CD8-positive, alpha-beta T cell (primary cell): ENCODE measurements at regions of chr1 and their contacts with region 1.

Region 1: DNA sequence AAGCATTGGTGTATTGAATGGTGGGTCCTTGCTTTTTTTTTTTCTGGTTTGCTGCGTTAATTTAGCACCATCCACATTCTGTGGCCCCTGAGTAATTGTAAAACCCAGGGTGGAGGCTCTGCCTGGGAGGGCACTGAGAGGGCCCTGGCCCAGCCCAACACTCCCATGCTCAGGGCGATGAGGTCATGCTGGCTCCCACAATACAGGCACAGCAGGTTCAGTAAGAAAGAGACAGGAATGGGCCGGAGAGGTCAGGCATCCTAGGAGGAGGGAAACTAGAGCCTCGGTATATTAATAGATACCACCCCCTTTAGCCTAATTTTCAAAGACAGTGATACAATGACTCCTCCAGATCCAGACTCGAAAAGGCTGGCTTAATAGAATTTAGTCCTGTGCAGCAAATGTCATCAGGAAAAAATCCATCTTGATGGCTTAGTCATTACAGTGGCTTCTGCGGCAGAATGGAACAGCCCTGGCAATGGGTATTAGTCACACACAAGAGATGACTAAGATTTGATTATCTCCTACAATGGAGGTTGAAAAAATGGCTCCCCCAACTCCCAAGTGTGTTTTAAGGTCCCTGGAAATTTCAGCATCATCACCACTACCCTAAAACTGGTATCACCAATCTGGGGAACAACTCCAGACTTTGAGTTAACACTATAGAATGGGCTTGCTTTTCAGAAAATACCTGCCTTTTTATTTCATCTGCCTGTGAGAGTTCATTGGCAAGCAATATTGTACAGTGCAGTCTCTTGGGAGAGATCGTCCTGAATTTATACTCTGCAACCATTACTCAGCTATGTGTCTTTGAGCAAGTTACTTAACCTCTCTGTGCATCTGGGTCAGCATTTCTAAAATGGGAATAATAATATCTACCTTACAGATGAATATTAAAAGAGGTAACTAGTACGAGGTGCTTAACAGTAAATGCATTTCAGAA is 43.9 kb upstream of the LYST start:
- DNase-seq: no peak
- ATAC-seq: no peak
- H3K4me3 ChIP-seq: no peak overlapping the region
- H3K4me3 Mint-ChIP-seq: no peak overlapping the region
- H3K27ac ChIP-seq: no peak overlapping the region
- H3K27ac Mint-ChIP-seq: no peak overlapping the region
- H3K4me1 ChIP-seq: no peaks in the 10 kb centered on the region
- H3K4me1 Mint-ChIP-seq: no peaks in the 10 kb centered on the region
- H3K27me3 ChIP-seq: no peaks in the 10 kb centered on the region
- H3K27me3 Mint-ChIP-seq: no peaks in the 10 kb centered on the region
- CTCF ChIP-seq: no peak

Region 2: GRCh38 chr1:235852887-235853286 is 57.7 kb before region 1 on chr1:
- CTCF ChIA-PET with region 1: no interaction called
- POLR2A ChIA-PET with region 1: no interaction called
- intact Hi-C with region 1: no loop called
- DNase-seq: no peak
- ATAC-seq: no peak
- H3K4me3 ChIP-seq: no peak overlapping the region
- H3K4me3 Mint-ChIP-seq: no peak overlapping the region
- H3K27ac ChIP-seq: no peak overlapping the region
- H3K27ac Mint-ChIP-seq: no peak overlapping the region
- H3K4me1 ChIP-seq: peaks cover 21% of the 10 kb centered on the region
- H3K4me1 Mint-ChIP-seq: peaks cover 79% of the 10 kb centered on the region
- H3K27me3 ChIP-seq: no peaks in the 10 kb centered on the region
- H3K27me3 Mint-ChIP-seq: no peaks in the 10 kb centered on the region
- CTCF ChIP-seq: no peak

Region 3: DNA sequence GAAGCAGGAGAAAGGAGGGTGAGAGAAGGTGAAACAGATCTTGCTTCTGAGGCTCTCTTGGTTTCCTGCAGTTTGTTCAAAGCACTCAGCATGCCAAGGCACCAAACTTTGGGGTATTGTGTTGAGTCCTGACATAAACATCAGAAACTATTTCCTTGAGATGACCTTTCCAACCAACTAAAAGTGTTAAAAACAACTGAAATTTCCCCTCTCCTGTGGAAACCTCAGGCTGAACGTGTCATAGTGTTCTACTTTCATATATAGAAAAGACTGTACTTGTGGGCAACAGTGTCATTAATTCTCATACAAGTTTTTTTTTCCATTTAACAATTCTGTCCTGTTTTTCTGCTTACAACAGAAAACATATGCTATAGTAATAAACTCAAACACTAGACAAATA is 37.6 kb before region 1 on chr1:
- CTCF ChIA-PET with region 1: no interaction called
- POLR2A ChIA-PET with region 1: no interaction called
- intact Hi-C with region 1: loop called in 1 of 2 experiments (anchors 5 kb)
- DNase-seq: peak in 3 of 9 experiments; percentile 32 to 85 (median 65)
- ATAC-seq: peak; percentile 32
- H3K4me3 ChIP-seq: no peak overlapping the region
- H3K4me3 Mint-ChIP-seq: no peak overlapping the region
- H3K27ac ChIP-seq: peak overlapping the region in 1 of 2 experiments; percentile 76
- H3K27ac Mint-ChIP-seq: peak overlapping the region; percentile 85
- H3K4me1 ChIP-seq: peaks cover 25% of the 10 kb centered on the region
- H3K4me1 Mint-ChIP-seq: peaks cover 53% of the 10 kb centered on the region
- H3K27me3 ChIP-seq: no peaks in the 10 kb centered on the region
- H3K27me3 Mint-ChIP-seq: no peaks in the 10 kb centered on the region
- CTCF ChIP-seq: no peak